ENCODE measurements at regions of chr10 and their contacts with region 1.

Region 1: DNA sequence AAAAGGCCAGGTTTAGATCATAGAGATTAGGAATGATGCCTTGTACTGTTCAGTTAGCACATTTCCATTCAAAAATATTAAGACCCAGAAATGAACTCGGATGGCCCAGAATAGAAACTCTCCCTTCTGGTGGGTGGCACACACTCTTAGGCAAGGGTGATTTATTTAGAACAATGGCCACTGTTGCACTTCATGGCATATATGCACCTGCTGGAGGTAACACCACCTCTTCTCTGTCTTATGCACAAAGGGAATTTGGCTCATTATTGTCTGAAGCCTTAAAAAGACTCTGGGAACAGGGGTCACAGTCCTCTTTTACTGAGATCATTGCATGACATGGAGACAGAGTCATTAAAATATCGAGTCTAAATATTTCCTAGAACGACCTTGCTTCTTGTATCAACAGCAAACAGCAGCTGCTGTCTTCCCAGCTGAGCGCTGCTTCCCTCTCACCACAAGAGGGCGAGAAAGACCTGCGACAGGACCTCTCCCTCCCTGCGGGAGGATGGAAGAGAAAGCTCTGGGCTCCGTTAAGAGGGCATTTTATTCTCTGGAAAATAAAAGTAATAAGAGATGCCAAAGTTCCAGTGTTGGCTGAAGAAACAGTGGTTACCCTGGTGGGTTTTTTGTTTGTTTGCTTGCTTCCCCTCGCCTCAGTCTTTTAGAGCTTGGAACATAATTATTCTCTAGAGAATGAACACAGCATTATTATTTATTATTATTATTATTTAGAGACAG is 13.6 kb upstream of the BAMBI start:
- DNase-seq: peak; percentile 79 to 86
- ATAC-seq: peak; percentile 87 to 92
- H3K4me3 ChIP-seq: no peak overlapping the region
- H3K27ac ChIP-seq: peak overlapping the region; percentile 47 to 67; a peak in 5 of 6 replicates
- H3K4me1 ChIP-seq: peaks cover 28% of the 10 kb centered on the region
- CTCF ChIP-seq: peak; percentile 97
- EP300 ChIP-seq: no peak
- POLR2A ChIP-seq: no peak
- RAD21 ChIP-seq: peak; percentile 99

Region 2: GRCh38 chr10:28644647-28645046 is 19.1 kb before region 1 on chr10:
- CTCF ChIA-PET with region 1: interaction called, 14 read pairs
- POLR2A ChIA-PET with region 1: no interaction called
- DNase-seq: no peak
- ATAC-seq: no peak
- H3K4me3 ChIP-seq: no peak overlapping the region
- H3K27ac ChIP-seq: no peak overlapping the region
- H3K4me1 ChIP-seq: no peaks in the 10 kb centered on the region
- CTCF ChIP-seq: no peak
- EP300 ChIP-seq: no peak
- POLR2A ChIP-seq: no peak
- RAD21 ChIP-seq: no peak

Region 3: GRCh38 chr10:28939281-28940157 is 275.8 kb after region 1 on chr10:
- CTCF ChIA-PET with region 1: interaction called, 17 read pairs
- POLR2A ChIA-PET with region 1: interaction called, 8 read pairs
- DNase-seq: peak; percentile 92 to 100
- ATAC-seq: peak; percentile 94 to 96
- H3K4me3 ChIP-seq: peak overlapping the region; percentile 35
- H3K27ac ChIP-seq: peak overlapping the region; percentile 85
- H3K4me1 ChIP-seq: peaks cover 35% of the 10 kb centered on the region
- CTCF ChIP-seq: peak; percentile 89
- EP300 ChIP-seq: peak; percentile 95 to 97
- POLR2A ChIP-seq: no peak
- RAD21 ChIP-seq: peak; percentile 64 to 68

Region 4: DNA sequence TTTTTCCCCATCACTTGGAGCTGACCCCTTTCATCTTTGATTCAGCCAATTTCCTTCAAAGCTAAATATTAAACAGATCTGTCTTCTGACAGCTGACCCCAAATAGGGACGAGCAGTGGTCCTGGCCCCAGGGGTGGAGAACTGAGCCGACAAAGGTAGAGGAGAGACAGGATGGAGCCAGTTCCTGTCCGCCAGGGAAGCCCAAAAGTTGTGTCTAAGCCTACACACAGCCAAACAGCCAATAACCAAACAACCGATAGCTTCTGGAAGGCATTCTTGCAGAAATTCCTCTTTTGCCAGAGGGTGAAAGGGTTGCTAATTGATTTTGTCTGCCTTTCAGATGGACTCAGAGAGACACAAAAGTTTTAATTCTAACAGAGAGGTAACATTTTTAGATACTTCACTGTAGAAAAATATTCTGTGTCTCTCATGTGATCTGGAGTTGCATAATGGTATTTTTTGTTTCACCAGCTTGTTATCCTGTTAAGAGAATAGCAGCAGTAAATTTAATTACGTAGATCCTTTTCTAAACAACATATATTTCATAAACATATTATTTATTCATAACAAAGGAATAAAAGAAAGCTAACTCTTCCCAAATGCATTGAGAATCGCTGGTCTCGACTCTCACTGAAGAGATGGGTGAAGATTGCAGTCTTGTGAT is 463.4 kb after region 1 on chr10:
- CTCF ChIA-PET with region 1: interaction called, 20 read pairs
- POLR2A ChIA-PET with region 1: no interaction called
- DNase-seq: no peak
- ATAC-seq: no peak
- H3K4me3 ChIP-seq: no peak overlapping the region
- H3K27ac ChIP-seq: peak overlapping the region; percentile 27 to 48; a peak in 5 of 6 replicates
- H3K4me1 ChIP-seq: peaks cover 23% of the 10 kb centered on the region
- CTCF ChIP-seq: no peak
- EP300 ChIP-seq: no peak
- POLR2A ChIP-seq: no peak
- RAD21 ChIP-seq: no peak

Region 5: GRCh38 chr10:29304264-29305030 is 640.7 kb after region 1 on chr10:
- CTCF ChIA-PET with region 1: interaction called, 42 read pairs
- POLR2A ChIA-PET with region 1: interaction called, 3 read pairs
- DNase-seq: peak; percentile 73 to 79
- ATAC-seq: peak; percentile 77 to 92; a peak in 5 of 6 replicates
- H3K4me3 ChIP-seq: no peak overlapping the region
- H3K27ac ChIP-seq: peak overlapping the region; percentile 60 to 77
- H3K4me1 ChIP-seq: 0 out of 3 replicates have a peak, but pooled peaks cover 9% of the 10 kb centered on the region
- CTCF ChIP-seq: peak; percentile 90
- EP300 ChIP-seq: no peak
- POLR2A ChIP-seq: no peak
- RAD21 ChIP-seq: peak; percentile 97 to 98

Region 6: DNA sequence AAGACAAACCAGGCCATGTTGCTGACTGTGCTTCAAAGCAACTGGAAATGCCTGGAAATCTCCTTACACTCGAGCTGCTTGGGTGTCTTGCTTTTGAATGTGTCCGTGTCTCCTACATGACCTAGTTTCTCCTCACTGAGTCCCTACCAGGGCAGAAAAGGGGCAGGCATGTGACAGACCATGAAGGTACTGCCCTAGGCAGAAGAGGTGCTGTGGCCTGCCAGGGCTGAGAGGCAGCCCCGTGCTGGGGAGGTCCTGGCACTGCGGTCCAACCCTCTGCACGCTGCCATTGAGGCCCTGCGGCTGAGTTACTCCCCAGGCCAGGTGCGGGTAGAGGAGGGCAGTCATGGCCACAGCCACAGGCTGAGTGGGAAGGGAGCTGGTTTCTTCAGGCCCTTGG is 784.4 kb after region 1 on chr10:
- CTCF ChIA-PET with region 1: interaction called, 13 read pairs
- POLR2A ChIA-PET with region 1: no interaction called
- DNase-seq: no peak
- ATAC-seq: no peak
- H3K4me3 ChIP-seq: no peak overlapping the region
- H3K27ac ChIP-seq: no peak overlapping the region
- H3K4me1 ChIP-seq: 0 out of 3 replicates have a peak, but pooled peaks cover 5% of the 10 kb centered on the region
- CTCF ChIP-seq: no peak
- EP300 ChIP-seq: no peak
- POLR2A ChIP-seq: no peak
- RAD21 ChIP-seq: no peak

Measured in A549 (cell line).